BJ (cell line): ENCODE measurements at regions of chr3 and their contacts with region 1.

Region 1: GRCh38 chr3:38297947-38298711 is 16.0 kb downstream of the SLC22A14 start:
- DNase-seq: no peak
- H3K4me3 ChIP-seq: no peak overlapping the region
- H3K27me3 ChIP-seq: no peaks in the 10 kb centered on the region; the same call in 1 of the 2 replicates
- CTCF ChIP-seq: peak; percentile 52

Region 2: DNA sequence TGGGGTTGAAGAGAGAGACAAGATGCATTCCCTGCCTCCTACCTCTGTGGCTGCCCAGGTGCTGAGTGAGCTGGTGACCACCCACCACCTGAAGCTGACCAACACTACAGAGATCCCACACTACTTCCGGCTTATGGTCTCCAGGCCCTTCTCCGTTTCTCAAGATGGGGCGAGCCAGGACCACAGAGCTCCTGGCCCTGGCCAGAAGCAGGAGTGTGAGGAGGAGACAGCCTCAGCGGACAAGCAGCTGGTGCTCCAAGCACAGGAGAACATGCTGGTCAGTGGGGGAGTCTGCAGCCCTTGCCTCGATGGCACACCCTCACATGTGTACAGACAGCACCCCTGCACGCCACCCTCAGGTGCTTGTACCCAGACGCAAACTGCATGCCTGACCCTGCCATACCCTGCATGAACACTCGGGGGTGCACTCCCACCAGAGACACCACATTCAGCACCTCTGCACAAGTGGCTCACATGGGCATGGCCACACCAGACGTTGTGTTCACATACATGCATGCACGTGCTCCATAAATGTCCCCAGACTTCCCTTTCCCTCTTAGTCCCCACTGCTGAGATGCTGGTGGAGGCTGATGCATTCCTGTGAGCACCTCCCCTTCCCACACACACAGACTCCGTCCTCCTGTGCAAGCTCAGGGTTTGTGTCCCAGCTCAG is 180.2 kb before region 1 on chr3:
- CTCF ChIA-PET with region 1: interaction called, 32 read pairs
- POLR2A ChIA-PET with region 1: no interaction called
- DNase-seq: no peak
- H3K4me3 ChIP-seq: no peak overlapping the region
- H3K27me3 ChIP-seq: no peaks in the 10 kb centered on the region
- CTCF ChIP-seq: peak; percentile 83

Region 3: DNA sequence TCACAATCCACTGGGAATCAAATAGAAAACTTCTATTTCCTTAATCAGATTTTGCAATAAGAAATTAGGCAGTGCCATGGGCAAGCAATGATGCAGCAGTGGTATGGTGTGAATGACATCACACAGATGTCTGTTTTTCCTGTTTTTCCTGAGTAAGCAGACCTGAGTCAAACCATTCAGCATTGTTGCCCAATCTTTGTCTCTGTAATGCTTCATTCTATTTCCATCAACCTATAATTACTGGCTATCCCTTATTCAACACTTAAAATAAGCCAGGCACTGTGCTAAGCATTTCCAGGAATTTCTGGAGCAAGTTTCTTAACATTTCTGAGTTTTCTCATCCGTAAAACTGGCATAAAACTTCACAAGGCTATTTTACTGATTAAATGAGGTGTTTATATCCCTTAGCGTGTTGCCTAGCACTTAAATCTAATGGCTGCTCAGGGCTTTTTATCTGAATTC is 144.1 kb before region 1 on chr3:
- CTCF ChIA-PET with region 1: no interaction called
- POLR2A ChIA-PET with region 1: no interaction called
- DNase-seq: peak; percentile 46
- H3K4me3 ChIP-seq: no peak overlapping the region
- H3K27me3 ChIP-seq: no peaks in the 10 kb centered on the region
- CTCF ChIP-seq: no peak

Region 4: DNA sequence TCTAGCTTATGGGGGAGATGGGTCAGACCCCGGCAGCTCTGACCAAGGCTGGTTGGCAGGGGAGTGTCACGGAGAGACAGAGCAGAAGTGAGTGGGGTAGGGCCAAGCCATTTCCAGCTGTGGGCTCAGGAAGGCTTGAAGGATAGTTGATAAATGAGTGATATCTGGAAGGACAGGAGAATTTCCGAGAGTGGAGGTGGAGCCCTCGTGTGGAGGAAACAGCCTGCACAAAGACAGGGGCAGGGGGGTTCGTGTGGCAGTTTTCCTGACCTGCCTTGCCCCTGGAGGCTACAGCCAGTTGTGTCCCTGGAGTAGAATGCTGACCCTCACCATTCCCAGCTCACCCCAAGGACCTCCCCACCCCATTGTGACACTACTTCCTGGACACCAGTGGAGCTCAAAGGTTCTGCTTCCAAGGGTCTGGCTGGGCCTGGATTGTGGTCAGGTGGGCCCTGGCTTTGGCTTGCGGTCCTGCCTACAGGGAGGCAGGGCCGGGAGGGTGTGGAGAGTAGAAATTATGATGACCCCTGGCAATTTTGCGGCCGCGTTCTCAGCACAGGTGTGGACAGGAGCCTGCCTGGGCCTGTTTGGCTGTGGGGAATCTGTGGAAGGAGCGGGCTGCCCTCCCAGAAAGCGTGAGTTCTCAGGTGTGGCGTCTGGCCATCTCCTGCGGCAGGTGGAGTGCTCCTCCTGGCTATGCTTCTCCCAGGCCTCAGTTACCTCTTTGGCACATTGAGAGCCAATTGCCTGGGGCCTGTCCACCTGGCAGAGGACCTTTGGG is 16.0 kb before region 1 on chr3 and contains the start of gene SLC22A14:
- CTCF ChIA-PET with region 1: interaction called, 15 read pairs
- POLR2A ChIA-PET with region 1: no interaction called
- DNase-seq: no peak
- H3K4me3 ChIP-seq: no peak within 1 kb of the TSS
- H3K27me3 ChIP-seq: no peaks in the 10 kb centered on the region
- CTCF ChIP-seq: no peak
- polyA plus RNA-seq, gene SLC22A14: 0.15 and 0.33 TPM in 2 replicates

Region 5: GRCh38 chr3:38627956-38628355 is 329.8 kb after region 1 on chr3:
- CTCF ChIA-PET with region 1: no interaction called
- POLR2A ChIA-PET with region 1: no interaction called
- DNase-seq: no peak
- H3K4me3 ChIP-seq: no peak overlapping the region
- H3K27me3 ChIP-seq: no peaks in the 10 kb centered on the region
- CTCF ChIP-seq: peak; percentile 55